Prostate gland (tissue), 2 donors: ENCODE measurements at regions of chr19 and their contacts with region 1.

Region 1: GRCh38 chr19:41457241-41457640 is 14.3 kb downstream of the ERICH4 start:
- DNase-seq: no peak
- H3K4me3 ChIP-seq: no peak overlapping the region
- H3K27ac ChIP-seq: no peak overlapping the region
- H3K4me1 ChIP-seq: no peaks in the 10 kb centered on the region
- H3K27me3 ChIP-seq: no peaks in the 10 kb centered on the region
- CTCF ChIP-seq: no peak
- POLR2A ChIP-seq: no peak

Region 2: GRCh38 chr19:41597600-41598041 is 140.4 kb after region 1 on chr19:
- intact Hi-C with region 1: loop called (anchors 10 kb)
- DNase-seq: peak; percentile 50
- H3K4me3 ChIP-seq: no peak overlapping the region
- H3K27ac ChIP-seq: no peak overlapping the region
- H3K4me1 ChIP-seq: no peaks in the 10 kb centered on the region
- H3K27me3 ChIP-seq: no peaks in the 10 kb centered on the region
- CTCF ChIP-seq: peak; percentile 49 to 78 (median 72)
- POLR2A ChIP-seq: no peak